HCT116 (cell line): ENCODE measurements at regions of chr19 and their contacts with region 1.

Region 1: GRCh38 chr19:48203732-48204628 is 33.5 kb downstream of the ZSWIM9 start:
- DNase-seq: peak; percentile 95
- ATAC-seq: peak; percentile 97
- H3K4me3 ChIP-seq: peak overlapping the region; percentile 72 to 91
- H3K27ac ChIP-seq: peak overlapping the region; percentile 70
- H3K4me1 ChIP-seq: peaks cover 9 to 26% of the 10 kb centered on the region in 2 experiments; a peak in 3 of 4 replicates
- H3K27me3 ChIP-seq: no peaks in the 10 kb centered on the region
- CTCF ChIP-seq: no peak
- POLR2A ChIP-seq: peak; percentile 80
- RAD21 ChIP-seq: no peak

Region 2: DNA sequence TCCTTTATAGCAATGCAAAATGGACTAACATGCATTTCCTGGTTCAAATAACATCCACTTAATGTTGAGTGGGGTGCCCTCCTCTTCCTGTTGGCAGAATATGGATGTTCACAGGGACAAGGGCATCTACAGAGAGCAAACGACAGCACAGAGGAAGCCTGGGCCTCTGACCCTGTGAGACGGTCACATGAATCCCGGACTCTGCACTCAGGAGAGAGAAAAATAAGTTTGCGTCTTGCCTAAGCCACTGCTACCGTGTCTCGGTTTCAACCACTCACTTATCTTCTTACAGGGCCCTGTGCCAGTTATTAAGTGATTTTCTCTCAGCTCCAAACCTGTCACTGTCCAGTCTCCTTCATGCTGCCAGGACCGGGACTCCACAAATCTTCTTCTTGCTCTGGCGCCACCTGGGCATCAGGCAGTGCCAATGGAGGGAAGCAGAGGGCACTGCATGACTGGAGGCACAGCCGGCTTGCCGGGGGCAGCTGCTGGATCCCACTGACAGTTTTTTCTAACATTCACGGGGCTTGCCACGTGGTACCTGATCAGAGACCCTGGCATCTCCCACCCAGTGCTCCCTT is 45.7 kb before region 1 on chr19:
- CTCF ChIA-PET with region 1: no interaction called
- POLR2A ChIA-PET with region 1: no interaction called
- RAD21 ChIA-PET with region 1: no interaction called
- intact Hi-C with region 1: no loop called
- DNase-seq: no peak
- ATAC-seq: no peak
- H3K4me3 ChIP-seq: no peak overlapping the region
- H3K27ac ChIP-seq: no peak overlapping the region
- H3K4me1 ChIP-seq: no peaks in the 10 kb centered on the region
- H3K27me3 ChIP-seq: no peaks in the 10 kb centered on the region
- CTCF ChIP-seq: 0 out of 6 replicates have a peak, but pooled peaks of 1 of the 3 experiments have one; percentile 3
- POLR2A ChIP-seq: no peak
- RAD21 ChIP-seq: no peak

Region 3: DNA sequence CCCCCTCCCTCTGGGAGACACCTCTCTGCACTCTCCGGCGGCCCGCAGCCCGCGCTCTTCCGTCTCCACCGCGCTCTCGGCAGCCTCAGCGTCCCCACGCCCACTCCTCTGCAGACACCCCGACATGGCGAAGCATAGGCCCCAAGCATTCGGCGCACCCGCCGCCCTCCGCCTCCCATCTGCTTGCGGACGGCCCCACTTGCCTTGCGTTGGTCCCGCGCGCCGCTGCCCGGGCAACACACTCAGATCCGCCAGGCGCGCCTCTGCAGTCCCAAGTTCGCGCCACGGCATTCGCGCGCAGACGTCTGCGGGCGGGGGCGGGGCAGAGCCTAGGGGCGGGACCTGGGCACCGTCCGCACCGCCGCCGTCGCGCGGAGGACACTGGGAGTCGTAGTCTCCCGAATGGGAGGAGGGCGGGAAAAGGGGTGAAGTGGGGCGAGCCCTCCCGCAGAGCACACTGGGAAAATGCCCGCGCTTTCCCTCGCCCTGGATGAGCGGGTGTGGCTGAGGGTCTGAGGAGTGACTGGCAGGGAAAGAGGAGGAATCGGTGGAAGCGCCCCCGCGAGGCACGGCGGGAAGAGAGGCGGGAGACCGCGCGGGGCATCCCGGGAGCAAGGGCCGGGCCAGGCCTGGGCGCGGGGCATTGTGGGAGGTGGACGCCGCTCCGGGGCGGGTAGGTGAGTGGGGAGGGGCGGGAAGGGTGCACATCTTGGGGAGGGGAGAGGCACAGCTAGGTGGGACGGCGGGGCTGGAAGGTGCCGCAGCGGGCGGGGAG is 33.8 kb before region 1 on chr19 and contains the starts of genes LIG1 and ZSWIM9:
- CTCF ChIA-PET with region 1: no interaction called
- POLR2A ChIA-PET with region 1: interaction called, 13 read pairs
- RAD21 ChIA-PET with region 1: no interaction called
- intact Hi-C with region 1: no loop called
- DNase-seq: peak; percentile 87
- ATAC-seq: peak; percentile 90
- H3K4me3 ChIP-seq: peak within 1 kb of the TSS; percentile 95 to 100
- H3K27ac ChIP-seq: peak within 1 kb of the TSS; percentile 98
- H3K4me1 ChIP-seq: peaks cover 10 to 15% of the 10 kb centered on the region in 2 experiments; a peak in 3 of 4 replicates
- H3K27me3 ChIP-seq: no peaks in the 10 kb centered on the region
- CTCF ChIP-seq: no peak
- POLR2A ChIP-seq: no peak
- RAD21 ChIP-seq: no peak
- total RNA-seq, gene LIG1: 122 TPM
- total RNA-seq, gene ZSWIM9: 10.2 TPM

Region 4: DNA sequence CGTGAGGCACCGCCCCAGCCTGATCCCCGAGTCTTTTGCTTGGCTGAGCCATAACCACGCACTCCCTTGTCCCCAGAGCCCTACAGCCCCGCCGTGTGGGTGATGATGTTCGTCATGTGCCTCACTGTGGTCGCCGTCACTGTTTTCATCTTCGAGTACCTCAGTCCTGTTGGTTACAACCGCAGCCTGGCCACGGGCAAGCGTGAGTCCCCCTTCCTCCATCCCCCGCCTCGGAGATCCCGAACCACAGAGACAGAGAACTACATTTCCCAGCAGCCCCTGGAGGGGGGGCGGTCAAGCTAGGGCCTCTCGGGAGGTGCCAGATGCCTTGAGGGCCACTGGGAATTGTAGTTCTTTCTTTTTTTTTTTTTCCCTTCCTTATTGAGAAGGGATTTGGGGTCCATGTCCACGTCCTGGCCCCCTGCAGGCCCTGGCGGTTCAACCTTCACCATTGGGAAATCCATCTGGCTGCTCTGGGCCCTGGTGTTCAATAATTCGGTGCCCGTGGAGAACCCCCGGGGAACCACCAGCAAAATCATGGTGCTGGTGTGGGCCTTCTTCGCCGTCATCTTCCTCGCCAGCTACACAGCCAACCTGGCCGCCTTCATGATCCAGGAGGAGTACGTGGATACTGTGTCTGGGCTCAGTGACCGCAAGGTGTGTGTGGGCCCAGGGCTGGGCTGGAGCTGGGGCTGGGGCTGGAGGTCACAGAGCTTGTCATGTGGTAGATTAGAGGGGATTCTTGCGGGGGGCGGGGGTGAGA is 215.4 kb after region 1 on chr19:
- CTCF ChIA-PET with region 1: no interaction called
- POLR2A ChIA-PET with region 1: no interaction called
- RAD21 ChIA-PET with region 1: no interaction called
- intact Hi-C with region 1: no loop called
- DNase-seq: no peak
- ATAC-seq: no peak
- H3K4me3 ChIP-seq: no peak overlapping the region
- H3K27ac ChIP-seq: no peak overlapping the region
- H3K4me1 ChIP-seq: peaks cover 0 to 18% of the 10 kb centered on the region in 2 experiments; a peak in 3 of 4 replicates
- H3K27me3 ChIP-seq: no peaks in the 10 kb centered on the region
- CTCF ChIP-seq: no peak
- POLR2A ChIP-seq: no peak
- RAD21 ChIP-seq: no peak